ENCODE measurements at regions of chr2 and their contacts with region 1.

Region 1: DNA sequence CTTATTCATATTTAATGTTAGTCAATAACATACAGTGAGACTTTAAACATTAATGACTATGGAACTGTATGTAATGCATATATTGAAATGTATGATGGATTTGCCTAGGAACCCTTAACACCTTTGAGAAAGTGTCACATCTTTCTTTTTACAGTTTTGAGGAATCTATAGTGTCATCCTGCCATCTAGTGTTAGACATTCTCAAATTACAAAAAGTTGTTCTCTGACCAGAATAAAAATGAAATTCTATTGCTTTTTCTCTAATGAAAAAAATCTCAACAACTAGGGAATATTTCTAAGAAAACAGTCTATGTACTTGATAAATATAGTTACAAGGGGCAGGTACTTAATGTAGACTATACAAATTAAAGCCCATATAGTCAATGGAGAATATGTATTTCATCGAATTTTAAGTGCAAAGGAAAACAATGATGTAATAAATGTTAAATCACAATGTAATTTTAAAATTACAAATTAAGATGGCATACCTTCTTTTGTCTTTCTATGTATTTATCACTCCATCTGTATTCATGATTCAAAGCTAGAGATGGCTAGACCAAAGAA is 5.1 kb upstream of the CALCRL start:
- DNase-seq: no peak
- ATAC-seq: no peak

Region 2: DNA sequence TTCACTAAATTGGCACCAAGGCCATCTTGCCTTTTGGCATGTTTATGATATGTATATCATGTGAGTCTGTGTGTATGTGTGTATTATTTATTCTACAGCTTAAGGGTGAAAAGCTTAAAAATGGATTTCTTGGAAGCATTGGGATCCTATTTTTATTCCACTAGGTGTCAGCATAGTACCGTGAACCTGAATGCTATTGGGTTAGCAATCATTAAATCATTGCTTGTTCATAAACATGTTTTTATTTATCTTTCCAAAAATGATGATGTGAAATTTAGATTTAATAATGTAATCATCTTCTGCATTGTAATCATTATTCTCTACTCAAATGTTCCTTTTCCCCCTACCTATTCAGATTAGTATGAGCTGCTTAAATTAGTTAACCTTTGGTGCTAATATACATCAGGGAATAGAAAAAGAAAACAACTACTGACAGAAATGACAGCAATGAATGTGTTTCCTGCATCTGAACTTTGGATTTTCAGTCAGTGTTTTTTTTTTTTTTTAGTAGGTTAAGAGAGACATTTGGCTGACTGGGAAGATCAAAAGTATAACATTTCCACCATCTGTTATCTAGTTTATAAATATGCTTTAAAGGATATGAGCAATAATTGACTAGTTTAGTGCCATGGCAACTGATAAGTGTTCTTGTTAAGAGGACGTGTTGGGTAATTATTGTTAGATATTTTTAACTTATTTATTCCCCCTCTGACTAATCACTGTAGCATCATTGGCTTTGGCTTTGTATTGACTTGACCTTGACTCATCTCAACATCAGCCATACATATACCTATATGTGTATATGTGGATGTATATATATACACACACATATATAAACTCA is 590.1 kb before region 1 on chr2:
- intact Hi-C with region 1: loop called (anchors 2 kb)
- DNase-seq: no peak
- ATAC-seq: peak; percentile 60

Measured in left ventricle myocardium superior (tissue), 1 donor.